ENCODE measurements at regions of chr2 and their contacts with region 1.

Region 1: GRCh38 chr2:70570041-70570663 is 16.5 kb upstream of the TGFA start:
- DNase-seq: peak; percentile 96
- H3K4me3 ChIP-seq: peak overlapping the region in 1 of 3 experiments; percentile 15
- H3K27ac ChIP-seq: peak overlapping the region; percentile 95
- H3K4me1 ChIP-seq: peaks cover 32% of the 10 kb centered on the region
- H3K27me3 ChIP-seq: no peaks in the 10 kb centered on the region
- CTCF ChIP-seq: no peak

Region 2: DNA sequence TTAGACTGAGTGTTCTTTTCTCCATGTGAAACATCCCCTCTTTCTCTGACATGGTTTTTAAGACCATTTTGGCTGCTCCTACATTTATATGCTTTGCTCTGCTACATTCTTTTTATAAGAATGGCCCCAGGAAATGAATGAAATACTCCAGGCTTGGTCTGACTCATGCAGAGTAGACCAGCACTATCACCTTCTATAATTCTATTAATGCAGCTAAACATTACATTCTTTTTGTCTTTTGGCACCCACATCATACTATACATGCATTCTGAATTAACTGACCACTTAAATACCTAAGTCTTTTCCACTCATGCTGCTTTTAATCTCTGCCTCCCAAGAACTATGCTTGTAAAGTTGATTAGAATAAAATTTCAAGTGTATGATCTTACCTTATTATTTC is 1020.7 kb before region 1 on chr2:
- CTCF ChIA-PET with region 1: no interaction called
- dilution Hi-C with region 1: no loop called
- in situ Hi-C with region 1: no loop called
- intact Hi-C with region 1: loop called (anchors 5 kb)
- DNase-seq: peak; percentile 44
- H3K4me3 ChIP-seq: no peak overlapping the region
- H3K27ac ChIP-seq: no peak overlapping the region
- H3K4me1 ChIP-seq: peaks cover 12% of the 10 kb centered on the region
- H3K27me3 ChIP-seq: no peaks in the 10 kb centered on the region
- CTCF ChIP-seq: no peak

Region 3: DNA sequence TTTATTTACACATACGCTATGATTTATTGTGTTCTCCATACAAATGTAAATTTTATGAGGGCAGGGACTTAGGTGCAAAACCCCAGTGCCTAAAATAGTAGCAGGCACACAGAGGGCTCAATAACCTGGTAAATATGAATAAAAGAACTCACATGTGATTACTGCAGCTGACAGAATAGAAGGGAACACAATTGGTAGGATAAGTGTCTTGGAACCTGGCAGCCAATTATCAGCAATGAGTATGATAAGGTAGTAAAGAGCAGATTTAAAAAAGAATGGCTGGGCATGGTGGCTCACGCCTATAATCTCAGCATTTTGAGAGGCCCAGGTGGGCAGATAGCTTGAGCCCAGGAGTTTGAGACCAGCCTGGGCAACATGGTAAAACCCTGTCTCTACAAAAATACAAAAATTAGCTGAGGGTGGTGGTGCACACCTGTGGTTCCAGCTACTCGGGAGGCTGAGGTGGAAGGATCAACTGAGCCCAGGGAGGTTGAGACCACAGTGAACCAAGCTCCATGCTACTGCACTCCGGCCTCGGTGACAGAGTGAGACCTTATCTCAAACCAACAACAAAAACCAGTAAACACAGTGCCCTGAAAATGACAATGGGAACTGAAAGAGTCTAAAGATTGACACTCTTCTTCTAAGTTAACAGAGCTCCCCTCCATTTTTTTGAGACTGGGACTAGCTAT is 286.5 kb before region 1 on chr2:
- CTCF ChIA-PET with region 1: no interaction called
- dilution Hi-C with region 1: no loop called
- in situ Hi-C with region 1: no loop called
- intact Hi-C with region 1: no loop called
- DNase-seq: no peak
- H3K4me3 ChIP-seq: no peak overlapping the region
- H3K27ac ChIP-seq: no peak overlapping the region
- H3K4me1 ChIP-seq: no peaks in the 10 kb centered on the region
- H3K27me3 ChIP-seq: no peaks in the 10 kb centered on the region
- CTCF ChIP-seq: no peak

Region 4: GRCh38 chr2:70523996-70524965 is 45.9 kb before region 1 on chr2:
- CTCF ChIA-PET with region 1: no interaction called
- dilution Hi-C with region 1: no loop called
- in situ Hi-C with region 1: no loop called
- intact Hi-C with region 1: no loop called
- DNase-seq: peak; percentile 99
- H3K4me3 ChIP-seq: peak overlapping the region in 1 of 3 experiments; percentile 5
- H3K27ac ChIP-seq: peak overlapping the region; percentile 97
- H3K4me1 ChIP-seq: peaks cover 62% of the 10 kb centered on the region
- H3K27me3 ChIP-seq: no peaks in the 10 kb centered on the region
- CTCF ChIP-seq: no peak

Region 5: DNA sequence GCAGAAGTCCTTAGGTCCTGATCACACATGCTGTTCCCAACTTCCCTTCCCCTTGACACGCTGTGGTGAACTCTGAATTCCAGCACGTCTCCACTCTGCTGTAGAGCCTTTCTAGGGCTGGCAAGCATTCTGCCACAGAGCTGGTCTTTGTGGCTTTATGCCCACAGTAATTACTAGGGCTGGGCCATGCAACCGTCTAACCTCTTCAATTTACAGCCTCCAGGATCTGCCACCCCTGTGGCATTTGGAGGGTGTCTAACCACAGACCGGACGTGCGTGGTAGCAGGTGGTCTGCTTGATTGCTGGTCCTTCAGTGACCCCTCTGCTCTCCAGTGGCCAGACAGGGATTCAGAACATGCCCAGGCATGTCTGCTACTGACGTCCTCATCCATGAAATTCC is 26.6 kb after region 1 on chr2:
- CTCF ChIA-PET with region 1: no interaction called
- dilution Hi-C with region 1: no loop called
- in situ Hi-C with region 1: no loop called
- intact Hi-C with region 1: loop called (anchors 2 kb)
- DNase-seq: peak; percentile 85
- H3K4me3 ChIP-seq: no peak overlapping the region
- H3K27ac ChIP-seq: peak overlapping the region; percentile 92
- H3K4me1 ChIP-seq: peaks cover 24% of the 10 kb centered on the region
- H3K27me3 ChIP-seq: no peaks in the 10 kb centered on the region
- CTCF ChIP-seq: no peak